ENCODE measurements at regions of chr2 and their contacts with region 1.

Region 1: DNA sequence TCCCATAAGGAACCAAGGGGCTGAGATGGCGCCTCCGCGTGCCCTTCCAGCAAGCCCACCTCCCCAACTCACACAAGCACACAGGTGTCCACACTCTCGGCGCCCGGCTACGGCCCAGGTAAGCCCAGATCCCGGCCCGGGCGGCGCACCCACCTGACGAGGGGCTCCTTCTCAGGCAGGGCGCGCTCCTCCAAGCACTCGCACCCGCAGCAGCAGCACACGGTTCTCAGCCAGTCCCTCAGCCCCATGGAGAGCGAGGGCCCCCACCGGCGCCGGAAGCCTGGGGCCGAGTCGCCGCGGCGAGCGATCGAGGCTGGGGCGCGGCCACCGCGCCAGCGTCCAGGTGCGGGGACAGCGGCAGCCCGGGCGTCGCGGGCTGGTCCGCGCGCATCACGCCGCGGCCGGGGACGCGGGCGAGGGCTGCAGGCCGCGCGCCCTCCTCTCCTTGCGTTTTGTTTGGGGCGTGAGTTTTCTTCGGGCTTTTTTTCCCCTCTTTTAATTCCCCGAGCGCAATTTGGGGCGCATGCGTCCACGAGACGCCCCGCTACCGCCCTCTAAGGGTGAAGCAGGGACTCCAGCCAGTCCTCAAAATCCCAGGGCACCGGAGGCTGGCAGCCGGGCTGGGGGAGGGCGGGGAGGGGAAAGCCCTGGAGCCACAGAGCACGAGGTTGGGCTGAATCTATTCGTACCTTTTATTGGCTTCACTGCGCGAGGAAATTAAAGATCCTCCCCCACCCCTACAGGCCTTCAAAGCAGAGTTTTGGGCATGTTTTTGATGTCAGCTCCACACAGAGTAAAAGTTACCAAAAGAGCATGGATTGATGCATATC is at the start of gene MREG:
- DNase-seq: peak; percentile 84
- H3K4me3 ChIP-seq: peak within 1 kb of the TSS; percentile 79 to 94 (median 88)
- H3K27ac ChIP-seq: peak within 1 kb of the TSS; percentile 92
- H3K4me1 ChIP-seq: peaks cover 12% of the 10 kb centered on the region
- H3K27me3 ChIP-seq: no peaks in the 10 kb centered on the region
- CTCF ChIP-seq: peak; percentile 45 to 81
- total RNA-seq, gene MREG: 20.7 to 29.5 TPM

Region 2: DNA sequence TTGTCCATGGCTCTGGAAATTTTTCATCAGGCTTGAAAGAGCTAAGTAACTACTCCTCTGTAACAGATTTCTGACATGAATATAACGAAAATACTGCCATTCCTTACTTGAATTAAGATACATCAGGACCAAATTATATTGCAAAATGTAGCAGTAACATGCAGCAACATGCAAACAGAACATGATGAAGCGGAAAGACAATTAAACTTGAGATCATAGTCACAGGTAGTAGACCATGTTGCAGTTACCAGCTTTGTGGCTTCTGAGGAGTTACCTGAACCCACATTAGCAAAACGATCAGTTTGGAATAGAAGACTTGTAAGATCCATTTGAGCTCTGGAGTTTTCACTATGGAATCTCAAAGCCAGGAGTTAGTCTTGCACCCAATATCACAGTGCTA is 76.1 kb before region 1 on chr2:
- CTCF ChIA-PET with region 1: no interaction called
- dilution Hi-C with region 1: no loop called
- in situ Hi-C with region 1: no loop called
- intact Hi-C with region 1: no loop called
- DNase-seq: peak; percentile 32
- H3K4me3 ChIP-seq: no peak overlapping the region
- H3K27ac ChIP-seq: no peak overlapping the region
- H3K4me1 ChIP-seq: peaks cover 6% of the 10 kb centered on the region
- H3K27me3 ChIP-seq: no peaks in the 10 kb centered on the region
- CTCF ChIP-seq: no peak

Region 3: GRCh38 chr2:215949991-215950404 is 63.3 kb before region 1 on chr2:
- CTCF ChIA-PET with region 1: no interaction called
- dilution Hi-C with region 1: no loop called
- in situ Hi-C with region 1: no loop called
- intact Hi-C with region 1: loop called (anchors 2 kb)
- DNase-seq: peak; percentile 60
- H3K4me3 ChIP-seq: no peak overlapping the region
- H3K27ac ChIP-seq: no peak overlapping the region
- H3K4me1 ChIP-seq: no peaks in the 10 kb centered on the region
- H3K27me3 ChIP-seq: no peaks in the 10 kb centered on the region
- CTCF ChIP-seq: peak; percentile 62 to 70

Region 4: DNA sequence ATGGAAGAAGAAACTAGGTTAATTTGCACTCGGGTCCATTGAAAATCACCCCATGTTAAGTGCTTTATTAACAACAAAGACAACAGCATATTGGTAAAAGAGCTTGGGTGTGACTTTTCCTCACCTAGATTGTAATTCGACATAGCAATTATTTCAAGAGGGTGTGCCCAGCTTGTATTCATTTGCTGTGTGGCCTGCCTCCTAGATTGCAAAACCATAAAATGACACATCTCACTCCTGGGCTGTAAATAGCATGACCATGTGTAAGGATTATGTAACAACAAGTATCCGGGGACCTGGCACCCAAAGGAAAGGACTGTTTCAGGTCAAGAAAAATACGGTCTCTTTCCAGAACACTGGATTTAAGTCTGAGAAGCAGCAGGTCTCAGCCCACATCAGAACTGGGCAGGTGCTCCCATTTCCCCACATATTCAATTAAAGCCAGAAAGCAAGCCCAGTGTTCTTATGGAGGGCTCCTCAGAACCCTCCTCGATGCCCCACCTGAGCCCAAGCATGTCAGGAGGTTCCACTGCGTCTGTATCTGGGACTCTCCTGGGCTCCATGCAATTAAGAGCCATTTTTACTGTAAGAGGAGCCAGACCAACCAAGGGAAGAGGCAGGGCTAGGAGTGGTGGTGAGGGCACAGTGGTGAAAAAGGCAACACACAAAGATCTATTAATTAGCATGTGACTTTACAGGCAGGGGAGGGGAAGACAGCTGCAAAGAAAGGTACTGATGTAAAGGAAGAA is 39.2 kb before region 1 on chr2:
- CTCF ChIA-PET with region 1: no interaction called
- dilution Hi-C with region 1: no loop called
- in situ Hi-C with region 1: no loop called
- intact Hi-C with region 1: loop called (anchors 2 kb)
- DNase-seq: peak; percentile 84
- H3K4me3 ChIP-seq: no peak overlapping the region
- H3K27ac ChIP-seq: no peak overlapping the region
- H3K4me1 ChIP-seq: peaks cover 16% of the 10 kb centered on the region
- H3K27me3 ChIP-seq: no peaks in the 10 kb centered on the region
- CTCF ChIP-seq: peak in 1 of 2 donors; percentile 14

Region 5: DNA sequence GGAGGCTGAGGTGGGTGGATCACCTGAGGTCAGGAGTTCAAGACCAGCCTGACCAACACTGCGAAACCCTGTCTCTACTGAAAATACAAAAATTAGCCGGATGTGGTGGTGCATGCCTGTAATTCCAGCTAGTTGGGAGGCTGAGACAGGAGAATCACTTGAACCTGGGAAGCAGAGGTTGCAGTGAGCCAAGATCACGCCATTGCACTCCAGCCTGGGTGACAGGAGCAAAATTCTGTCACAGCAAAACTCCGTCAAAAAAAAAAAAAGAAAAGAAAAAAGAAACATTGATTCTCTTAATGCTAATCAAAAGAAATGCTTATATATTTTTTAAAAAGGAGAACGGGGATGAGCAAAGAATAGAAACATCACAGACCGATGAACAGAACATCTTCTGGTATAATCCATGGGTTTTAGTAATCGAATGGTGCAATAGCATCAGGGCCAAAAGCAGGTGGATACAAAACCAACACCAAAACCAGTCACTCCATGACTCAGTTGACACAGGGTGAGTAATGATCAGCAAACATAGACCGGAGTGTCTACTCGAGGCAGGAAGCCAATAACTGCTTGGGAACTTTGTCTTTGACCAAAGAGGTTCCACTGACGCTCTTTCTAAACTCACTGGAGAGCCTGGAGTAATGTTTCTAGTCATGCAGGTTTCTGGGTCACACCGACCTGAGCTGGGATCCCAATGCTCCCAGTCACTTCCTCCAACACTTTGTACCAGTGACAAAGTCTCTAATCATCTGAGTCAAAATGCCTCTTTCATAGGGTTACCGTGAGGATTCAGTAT is 31.0 kb before region 1 on chr2:
- CTCF ChIA-PET with region 1: no interaction called
- dilution Hi-C with region 1: no loop called
- in situ Hi-C with region 1: no loop called
- intact Hi-C with region 1: loop called (anchors 1 kb)
- DNase-seq: peak; percentile 100
- H3K4me3 ChIP-seq: no peak overlapping the region
- H3K27ac ChIP-seq: peak overlapping the region; percentile 80
- H3K4me1 ChIP-seq: peaks cover 21% of the 10 kb centered on the region
- H3K27me3 ChIP-seq: no peaks in the 10 kb centered on the region
- CTCF ChIP-seq: no peak

Region 6: GRCh38 chr2:216436383-216436782 is 423.1 kb after region 1 on chr2:
- CTCF ChIA-PET with region 1: no interaction called
- dilution Hi-C with region 1: no loop called
- in situ Hi-C with region 1: no loop called
- intact Hi-C with region 1: no loop called
- DNase-seq: no peak
- H3K4me3 ChIP-seq: no peak overlapping the region
- H3K27ac ChIP-seq: no peak overlapping the region
- H3K4me1 ChIP-seq: no peaks in the 10 kb centered on the region
- H3K27me3 ChIP-seq: no peaks in the 10 kb centered on the region
- CTCF ChIP-seq: no peak